ENCODE measurements at regions of chr16 and their contacts with region 1.

Region 1: DNA sequence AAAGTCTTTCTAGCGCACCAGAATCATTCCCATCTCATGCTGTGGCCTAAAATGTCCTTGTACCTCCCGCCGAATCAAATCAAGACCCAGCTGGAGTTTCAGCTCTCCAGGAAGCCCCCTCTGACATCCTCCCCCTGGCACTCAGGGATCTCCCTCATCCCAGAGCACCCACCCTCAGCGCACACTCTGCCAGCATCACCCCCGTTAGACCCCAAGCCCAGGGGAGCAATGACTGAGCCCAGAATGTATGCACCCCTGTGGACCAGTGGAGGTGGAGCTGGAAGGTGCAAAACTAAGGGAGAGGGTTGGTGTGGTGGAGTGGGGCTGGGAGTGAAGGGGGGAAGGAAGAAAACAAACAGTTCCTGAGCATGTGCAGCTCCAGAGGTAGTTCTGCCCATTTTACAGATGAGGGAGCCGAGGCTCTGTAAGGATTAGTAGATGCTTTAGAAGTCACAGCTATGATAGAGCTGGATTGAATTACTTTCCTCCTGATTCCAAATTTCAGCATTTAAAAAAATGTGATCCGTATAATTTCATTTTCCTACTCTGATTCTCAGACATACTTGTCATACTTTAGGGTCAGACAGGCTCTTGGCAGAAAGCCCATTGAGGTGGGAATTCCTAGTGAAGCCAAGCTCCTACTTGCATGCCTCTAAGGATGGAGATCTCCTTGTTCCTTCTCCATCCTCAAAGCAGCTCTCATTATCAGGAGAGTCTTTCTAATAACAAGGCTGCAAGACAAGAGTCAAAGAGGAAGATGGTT is 242.7 kb downstream of the KATNIP start:
- DNase-seq: peak in 1 of 2 donors; percentile 74
- H3K4me3 ChIP-seq: no peak overlapping the region
- H3K27ac ChIP-seq: peak overlapping the region; percentile 54 to 69
- H3K4me1 ChIP-seq: peaks cover 8 to 27% of the 10 kb centered on the region in 2 donors
- H3K27me3 ChIP-seq: no peaks in the 10 kb centered on the region
- CTCF ChIP-seq: no peak

Region 2: DNA sequence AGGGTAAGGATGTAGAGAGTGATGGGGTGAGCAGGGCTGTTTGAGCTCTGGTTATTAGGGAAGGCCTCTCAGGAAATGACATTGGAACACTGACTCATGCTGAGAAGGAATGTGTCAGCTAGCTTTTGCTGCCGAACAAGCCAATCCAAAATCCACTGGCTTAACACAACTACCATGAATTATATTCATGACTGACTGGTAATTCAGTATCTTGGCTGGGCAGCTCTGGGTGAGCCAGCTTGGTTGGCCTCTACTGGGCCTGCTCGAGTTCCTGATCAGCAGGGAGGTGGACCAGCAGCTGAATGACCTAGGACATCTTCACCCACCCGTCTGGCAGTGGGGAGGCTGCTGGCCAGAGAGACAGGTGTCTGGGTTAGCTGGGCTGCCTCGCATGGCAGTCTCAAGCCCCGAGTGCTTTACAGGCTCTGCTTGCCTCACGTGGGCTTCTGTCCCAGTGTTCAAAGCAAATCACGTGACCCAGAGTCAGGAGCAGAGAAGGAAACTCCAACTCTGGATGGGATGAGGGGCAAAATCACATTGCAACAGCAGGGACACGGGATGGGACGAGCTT is 33.3 kb before region 1 on chr16:
- intact Hi-C with region 1: loop called (anchors 5 kb)
- DNase-seq: peak in 1 of 2 donors; percentile 66
- H3K4me3 ChIP-seq: no peak overlapping the region
- H3K27ac ChIP-seq: peak overlapping the region; percentile 72 to 80
- H3K4me1 ChIP-seq: peaks cover 5 to 15% of the 10 kb centered on the region in 2 donors
- H3K27me3 ChIP-seq: no peaks in the 10 kb centered on the region
- CTCF ChIP-seq: no peak

Measured in ascending aorta (tissue), 2 donors.